Calu3 (cell line): ENCODE measurements at regions of chr3 and their contacts with region 1.

Region 1: DNA sequence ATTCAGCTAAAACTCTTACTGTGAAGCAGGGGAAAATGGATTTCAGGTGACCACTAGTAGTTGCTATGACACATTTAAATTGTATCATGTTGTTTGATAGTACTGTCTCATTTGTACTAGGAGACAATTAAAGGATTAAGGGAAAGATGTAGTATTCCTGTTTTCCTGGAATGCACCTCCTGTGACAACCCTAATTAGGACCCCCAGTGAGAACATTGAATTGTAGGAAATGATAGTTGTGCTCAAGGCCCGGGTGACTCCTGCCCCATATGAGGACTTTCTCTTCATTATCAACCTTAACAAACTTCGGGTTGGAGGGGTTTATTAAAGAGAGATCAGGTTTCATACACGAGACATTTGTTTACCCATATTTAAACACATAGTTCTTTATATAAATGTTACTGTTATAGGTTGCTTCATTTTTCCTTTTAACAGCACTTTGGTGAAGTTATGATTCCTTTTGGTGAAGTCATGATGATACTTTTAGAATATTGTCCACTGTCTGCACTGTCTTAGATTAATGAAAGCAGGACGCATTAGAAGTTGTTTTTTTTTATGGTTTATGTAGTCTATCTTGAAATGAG is 392.6 kb upstream of the NAALADL2 start:
- DNase-seq: no peak
- H3K4me3 Mint-ChIP-seq: no peak overlapping the region
- H3K27ac Mint-ChIP-seq: no peak overlapping the region
- H3K4me1 Mint-ChIP-seq: no peaks in the 10 kb centered on the region
- H3K27me3 Mint-ChIP-seq: no peaks in the 10 kb centered on the region
- CTCF ChIP-seq: no peak

Region 2: GRCh38 chr3:174524203-174524602 is 57.6 kb after region 1 on chr3:
- CTCF ChIA-PET with region 1: interaction called, 13 read pairs
- intact Hi-C with region 1: no loop called
- DNase-seq: no peak
- H3K4me3 Mint-ChIP-seq: no peak overlapping the region
- H3K27ac Mint-ChIP-seq: no peak overlapping the region
- H3K4me1 Mint-ChIP-seq: no peaks in the 10 kb centered on the region
- H3K27me3 Mint-ChIP-seq: no peaks in the 10 kb centered on the region
- CTCF ChIP-seq: no peak